ENCODE measurements at regions of chr11 and their contacts with region 1.

Region 1: GRCh38 chr11:123478352-123478987 is 48.4 kb downstream of the GRAMD1B start:
- DNase-seq: no peak
- ATAC-seq: peak; percentile 89
- H3K4me3 ChIP-seq: no peak overlapping the region
- H3K27ac ChIP-seq: no peak overlapping the region
- H3K4me1 ChIP-seq: no peaks in the 10 kb centered on the region
- H3K27me3 ChIP-seq: no peaks in the 10 kb centered on the region
- CTCF ChIP-seq: peak; percentile 72

Region 2: DNA sequence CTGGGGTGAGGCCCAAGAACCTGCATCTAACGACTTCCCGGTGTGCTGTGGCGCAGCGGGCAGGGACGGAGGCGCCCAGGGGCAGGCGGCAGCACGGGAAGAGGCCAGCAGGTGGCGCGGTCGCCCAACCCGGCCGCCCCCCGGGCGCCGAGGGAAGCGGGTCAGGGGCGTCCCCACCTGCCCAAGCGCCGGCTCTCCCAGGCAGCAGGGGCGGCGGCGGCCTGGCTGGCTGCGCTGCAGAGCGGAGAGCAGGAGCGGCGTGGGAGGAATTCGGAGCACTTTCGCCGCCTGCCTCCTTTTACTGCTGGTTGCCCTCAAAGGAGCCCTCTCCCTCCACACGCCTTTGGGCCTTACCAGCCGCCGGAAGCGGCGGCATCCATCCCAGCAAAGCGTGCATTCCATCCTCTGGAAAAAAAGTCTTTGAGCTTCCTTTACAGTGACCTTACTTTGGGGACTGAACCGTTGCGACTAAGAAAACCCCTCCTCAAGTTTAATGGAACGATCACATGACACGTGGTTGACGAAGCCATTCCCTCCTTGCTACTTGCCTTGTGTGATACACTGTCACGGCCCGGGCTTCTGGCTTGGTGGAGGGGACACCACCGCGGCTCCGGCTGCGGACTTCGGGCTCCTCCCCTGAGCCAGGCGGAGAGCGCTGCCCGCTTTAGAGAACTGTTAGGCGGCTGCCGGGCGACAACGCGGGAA is 176.6 kb before region 1 on chr11:
- intact Hi-C with region 1: loop called (anchors 10 kb)
- DNase-seq: peak; percentile 84
- ATAC-seq: peak; percentile 91
- H3K4me3 ChIP-seq: peak overlapping the region; percentile 41
- H3K27ac ChIP-seq: no peak overlapping the region
- H3K4me1 ChIP-seq: peaks cover 11% of the 10 kb centered on the region
- H3K27me3 ChIP-seq: no peaks in the 10 kb centered on the region
- CTCF ChIP-seq: peak; percentile 87

Measured in upper lobe of right lung (tissue), 1 donor.